Ascending aorta (tissue), 2 donors: ENCODE measurements at regions of chr4 and their contacts with region 1.

Region 1: DNA sequence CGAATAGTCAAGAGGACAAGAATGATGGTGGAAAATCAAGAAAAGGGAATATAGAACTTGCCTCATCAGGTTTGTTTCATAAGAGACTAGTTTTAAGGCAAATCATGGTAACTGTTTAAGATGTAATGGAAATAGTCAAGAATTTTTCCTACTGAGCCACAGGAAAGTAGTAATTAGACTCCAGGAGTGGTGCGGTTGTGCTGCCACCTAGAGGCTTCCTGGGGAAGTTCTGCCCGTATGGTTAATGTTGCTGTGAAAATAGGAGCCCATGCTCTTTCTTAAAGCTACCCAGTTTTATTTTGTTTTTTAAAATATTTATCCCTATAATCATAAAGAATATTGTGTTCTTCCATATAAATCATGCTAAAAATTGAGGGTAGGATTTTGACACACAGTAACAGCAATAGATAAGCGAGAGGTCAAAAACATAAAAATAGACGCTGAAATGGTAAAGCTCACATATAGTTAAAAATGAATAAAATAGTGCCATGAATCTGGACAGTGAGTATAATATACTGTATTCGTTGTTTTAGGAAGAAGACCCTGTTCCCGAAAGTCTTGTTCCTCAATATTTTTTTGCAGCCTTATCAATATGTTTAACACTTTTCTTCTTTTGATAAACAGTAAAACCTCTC is 87.0 kb downstream of the PHOX2B start:
- DNase-seq: peak in 1 of 2 donors; percentile 79
- H3K4me3 ChIP-seq: no peak overlapping the region
- H3K27ac ChIP-seq: no peak overlapping the region
- H3K4me1 ChIP-seq: peaks cover 7% of the 10 kb centered on the region in 2 donors
- H3K27me3 ChIP-seq: no peaks in the 10 kb centered on the region
- CTCF ChIP-seq: peak; percentile 73 to 93 (median 92)

Region 2: DNA sequence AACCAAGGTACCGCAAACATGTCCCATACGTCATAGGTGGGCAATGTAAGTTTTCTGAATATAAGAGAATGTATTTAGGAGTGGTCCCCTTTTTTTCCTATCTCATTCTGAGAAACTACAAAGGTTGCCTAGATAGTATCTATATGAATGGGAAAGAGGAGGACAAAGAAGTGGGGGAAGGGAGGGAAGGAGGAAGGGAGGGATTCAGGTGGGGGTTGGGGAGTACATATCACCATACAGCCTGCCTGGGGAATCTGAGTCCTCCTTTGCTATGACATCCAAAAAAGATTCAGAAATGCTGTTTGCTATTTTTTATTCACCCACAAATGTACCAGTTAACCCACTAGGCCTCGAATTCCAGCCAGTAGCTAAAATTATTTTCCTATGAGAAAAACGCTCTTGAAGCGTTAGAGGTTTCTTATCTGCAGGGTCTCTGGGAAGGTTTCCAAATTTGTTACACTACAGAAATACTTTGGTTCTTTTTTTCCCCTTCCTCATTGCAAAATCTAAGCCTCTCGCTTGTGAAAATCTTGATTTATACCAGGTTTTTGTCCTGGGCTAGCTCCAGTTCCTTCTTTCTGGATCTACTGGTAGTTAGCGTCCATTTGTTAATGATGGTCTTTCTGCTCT is 698.9 kb before region 1 on chr4:
- intact Hi-C with region 1: no loop called
- DNase-seq: no peak
- H3K4me3 ChIP-seq: no peak overlapping the region
- H3K27ac ChIP-seq: peak overlapping the region; percentile 53 to 70
- H3K4me1 ChIP-seq: peaks cover 14 to 27% of the 10 kb centered on the region in 2 donors
- H3K27me3 ChIP-seq: no peaks in the 10 kb centered on the region
- CTCF ChIP-seq: no peak

Region 3: DNA sequence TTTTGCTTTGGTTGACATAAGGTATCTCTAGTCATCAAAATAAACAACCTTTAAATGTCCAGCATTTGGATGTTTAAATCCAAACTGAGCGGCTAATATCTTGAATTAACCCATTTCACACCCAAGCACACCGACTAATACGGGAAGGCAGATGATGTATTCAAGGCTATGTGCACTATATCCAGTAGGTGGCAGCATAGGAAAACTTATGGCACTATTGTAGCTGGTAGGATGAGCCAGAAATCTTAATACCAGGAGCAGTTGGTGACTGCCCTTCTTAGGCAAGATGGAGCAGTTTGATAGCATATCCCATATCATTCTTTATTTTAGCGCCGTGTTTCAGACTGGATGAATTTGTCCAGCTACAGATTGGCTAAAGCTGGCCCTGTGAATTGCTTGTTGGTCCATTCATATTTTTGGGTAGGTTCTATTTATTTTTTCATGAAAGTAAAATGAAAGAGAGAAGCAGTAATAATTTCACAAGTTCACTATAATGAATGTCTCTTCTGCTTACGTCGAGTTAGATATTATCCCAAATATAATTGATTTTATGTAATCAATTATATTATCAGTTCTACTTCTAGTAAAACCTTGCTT is 380.4 kb before region 1 on chr4:
- intact Hi-C with region 1: loop called (anchors 1 kb)
- DNase-seq: peak in 1 of 2 donors; percentile 67
- H3K4me3 ChIP-seq: no peak overlapping the region
- H3K27ac ChIP-seq: no peak overlapping the region
- H3K4me1 ChIP-seq: no peaks in the 10 kb centered on the region
- H3K27me3 ChIP-seq: no peaks in the 10 kb centered on the region
- CTCF ChIP-seq: peak; percentile 81 to 87 (median 83)

Region 4: DNA sequence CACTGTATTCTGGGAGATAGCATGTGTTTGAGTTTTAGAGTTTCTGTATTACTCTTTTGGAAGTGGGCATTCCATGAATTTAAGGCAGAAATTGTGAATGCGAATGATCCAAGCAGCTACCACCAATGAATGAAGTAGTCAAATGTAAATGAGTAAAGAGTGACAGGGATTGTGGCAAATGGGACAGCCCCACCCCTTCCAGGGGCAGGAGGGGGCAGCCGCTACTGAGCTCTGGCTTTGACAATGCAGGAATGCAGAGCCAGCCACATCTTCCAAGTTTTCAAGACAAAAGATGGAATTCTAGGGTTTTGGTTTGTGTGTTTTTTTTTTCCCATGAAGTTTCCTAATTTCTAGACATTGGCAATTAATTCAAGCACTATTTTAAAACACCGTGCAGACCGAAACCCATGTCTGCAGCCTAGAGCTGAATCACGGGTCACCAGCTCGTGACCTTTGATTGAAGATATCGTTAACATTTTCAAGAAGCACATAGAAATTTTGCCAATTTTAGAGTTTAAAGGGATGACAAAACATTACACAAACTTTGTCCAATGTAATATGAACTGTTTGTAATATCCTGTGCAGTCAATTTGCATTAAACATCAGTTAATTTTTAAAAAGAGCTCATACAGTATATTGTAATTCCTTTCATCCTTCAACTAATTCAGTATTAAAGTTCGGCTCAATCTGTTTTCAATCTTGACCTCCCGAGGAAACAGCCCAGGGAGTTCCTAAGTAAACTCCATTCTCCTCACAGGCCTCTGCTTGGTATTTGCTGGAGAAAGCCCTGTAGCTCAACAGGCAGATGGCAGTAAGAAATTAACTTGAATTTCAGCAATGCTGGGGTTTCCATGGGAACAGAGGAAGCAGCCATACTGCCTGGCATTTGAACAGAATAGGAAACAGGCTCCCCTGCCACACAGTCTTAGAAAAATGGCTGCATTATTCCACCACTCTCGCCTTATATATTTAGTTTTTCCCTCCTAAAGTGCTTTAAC is 321.4 kb before region 1 on chr4:
- intact Hi-C with region 1: loop called (anchors 1 kb)
- DNase-seq: peak in 1 of 2 donors; percentile 70
- H3K4me3 ChIP-seq: no peak overlapping the region
- H3K27ac ChIP-seq: no peak overlapping the region
- H3K4me1 ChIP-seq: peaks cover 0 to 7% of the 10 kb centered on the region in 2 donors
- H3K27me3 ChIP-seq: no peaks in the 10 kb centered on the region
- CTCF ChIP-seq: peak; percentile 20 to 64 (median 42)

Region 5: GRCh38 chr4:41432881-41433280 is 228.7 kb before region 1 on chr4:
- intact Hi-C with region 1: loop called (anchors 5 kb)
- DNase-seq: no peak
- H3K4me3 ChIP-seq: no peak overlapping the region
- H3K27ac ChIP-seq: peak overlapping the region; percentile 67 to 78
- H3K4me1 ChIP-seq: peaks cover 16 to 54% of the 10 kb centered on the region in 2 donors
- H3K27me3 ChIP-seq: no peaks in the 10 kb centered on the region
- CTCF ChIP-seq: no peak

Region 6: DNA sequence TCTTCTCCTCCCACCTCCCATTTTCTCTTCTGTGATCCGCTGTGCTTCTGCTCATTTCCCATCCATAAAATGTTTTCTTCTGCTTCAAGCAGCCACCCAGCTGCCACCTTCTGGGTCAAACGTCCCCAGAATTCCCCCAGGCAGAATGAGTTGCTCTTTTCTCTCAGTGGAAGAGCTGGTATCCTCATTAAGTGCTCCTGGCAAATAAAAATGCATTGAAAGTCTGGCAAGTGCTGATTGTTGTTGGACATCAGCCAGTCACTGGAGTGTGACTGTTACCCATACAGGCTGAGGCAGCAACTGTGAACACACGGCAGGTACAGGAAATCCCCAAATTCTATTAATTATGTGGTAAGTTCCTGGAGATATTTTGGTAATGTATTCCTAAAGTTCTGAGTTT is 71.0 kb before region 1 on chr4:
- intact Hi-C with region 1: no loop called
- DNase-seq: no peak
- H3K4me3 ChIP-seq: no peak overlapping the region
- H3K27ac ChIP-seq: peak overlapping the region in 1 of 2 donors; percentile 12
- H3K4me1 ChIP-seq: peaks cover 2 to 21% of the 10 kb centered on the region in 2 donors
- H3K27me3 ChIP-seq: no peaks in the 10 kb centered on the region
- CTCF ChIP-seq: no peak